ENCODE measurements at regions of chr15 and their contacts with region 1.

Region 1: GRCh38 chr15:29029651-29030195 is 143.9 kb downstream of the APBA2 start:
- DNase-seq: no peak
- ATAC-seq: no peak
- H3K4me3 Mint-ChIP-seq: no peak overlapping the region
- H3K27ac Mint-ChIP-seq: no peak overlapping the region
- H3K4me1 Mint-ChIP-seq: peaks cover 20% of the 10 kb centered on the region
- H3K27me3 Mint-ChIP-seq: no peaks in the 10 kb centered on the region

Region 2: DNA sequence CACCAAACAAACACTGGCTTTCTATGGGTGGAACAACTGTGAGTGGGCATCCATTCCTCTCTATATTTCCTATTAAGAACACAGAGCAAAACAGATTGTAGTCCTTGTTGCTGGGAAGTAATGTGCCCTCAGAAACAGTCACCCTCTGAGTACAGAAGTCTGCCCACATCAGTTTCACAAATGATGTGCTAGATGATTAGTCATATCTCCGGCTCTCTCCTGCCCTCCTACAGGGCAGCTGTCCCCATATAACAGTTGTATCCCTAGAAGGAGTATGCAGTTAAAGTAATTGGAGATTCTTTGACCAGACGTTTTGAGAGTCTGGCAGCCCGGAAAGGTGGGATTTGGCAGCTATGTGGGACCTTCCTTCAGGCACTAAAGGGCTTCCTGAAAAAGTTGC is 16.0 kb after region 1 on chr15:
- CTCF ChIA-PET with region 1: interaction called, 3 read pairs
- POLR2A ChIA-PET with region 1: no interaction called
- intact Hi-C with region 1: loop called in 1 of 2 experiments (anchors 2 kb)
- DNase-seq: peak; percentile 54
- ATAC-seq: peak; percentile 100
- H3K4me3 Mint-ChIP-seq: no peak overlapping the region
- H3K27ac Mint-ChIP-seq: peak overlapping the region; percentile 25
- H3K4me1 Mint-ChIP-seq: peaks cover 58% of the 10 kb centered on the region
- H3K27me3 Mint-ChIP-seq: no peaks in the 10 kb centered on the region

Region 3: DNA sequence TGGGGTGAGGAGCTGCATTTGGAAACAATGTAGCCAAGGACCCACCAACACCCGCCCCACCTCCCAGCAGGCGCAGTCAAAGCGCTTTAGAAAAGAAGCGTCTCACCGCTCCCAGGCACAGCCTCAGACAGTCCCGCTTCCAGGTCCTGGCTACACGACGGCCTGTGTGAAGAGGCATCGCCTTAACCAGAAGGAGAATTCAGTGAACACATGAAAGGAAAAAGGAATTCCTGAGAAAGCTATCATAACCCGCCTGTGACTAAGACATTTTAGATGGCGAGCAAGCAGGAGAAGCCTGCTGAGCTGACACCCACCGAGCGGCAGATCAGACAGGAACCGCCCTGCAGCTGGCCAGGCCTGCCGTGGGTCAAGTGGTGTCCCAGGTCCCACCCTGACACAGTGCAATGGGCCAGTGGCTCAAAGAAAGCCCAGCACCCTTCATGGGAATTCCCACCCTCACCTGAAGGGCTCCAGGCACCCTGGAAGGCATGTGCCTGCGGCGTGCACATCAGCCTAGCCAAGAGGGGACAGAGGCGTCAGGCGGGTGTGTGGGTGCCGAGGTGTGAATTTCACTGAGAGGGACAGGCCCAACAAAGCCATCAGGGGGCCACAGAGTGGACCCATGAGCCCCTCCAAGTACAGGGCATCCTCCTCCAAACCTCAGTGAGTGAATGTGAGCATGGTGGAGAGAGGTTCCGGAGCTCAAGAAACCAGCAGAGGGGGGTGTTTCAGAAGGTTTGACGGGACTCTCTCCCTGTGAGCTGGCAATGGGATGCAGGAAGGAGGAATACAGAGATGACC is 95.1 kb after region 1 on chr15:
- CTCF ChIA-PET with region 1: no interaction called
- POLR2A ChIA-PET with region 1: no interaction called
- intact Hi-C with region 1: no loop called
- DNase-seq: no peak
- ATAC-seq: no peak
- H3K4me3 Mint-ChIP-seq: no peak overlapping the region
- H3K27ac Mint-ChIP-seq: no peak overlapping the region
- H3K4me1 Mint-ChIP-seq: no peaks in the 10 kb centered on the region
- H3K27me3 Mint-ChIP-seq: no peaks in the 10 kb centered on the region

Region 4: GRCh38 chr15:29289173-29289572 is 259.4 kb after region 1 on chr15:
- CTCF ChIA-PET with region 1: no interaction called
- POLR2A ChIA-PET with region 1: no interaction called
- intact Hi-C with region 1: no loop called
- DNase-seq: no peak
- ATAC-seq: no peak
- H3K4me3 Mint-ChIP-seq: no peak overlapping the region
- H3K27ac Mint-ChIP-seq: no peak overlapping the region
- H3K4me1 Mint-ChIP-seq: no peaks in the 10 kb centered on the region
- H3K27me3 Mint-ChIP-seq: peaks cover 29% of the 10 kb centered on the region

Measured in activated CD4-positive, alpha-beta T cell treated with anti-CD3 and anti-CD28 coated beads for 36 hours (primary cell).